Mammary epithelial cell (primary cell): ENCODE measurements at regions of chr17 and their contacts with region 1.

Region 1: DNA sequence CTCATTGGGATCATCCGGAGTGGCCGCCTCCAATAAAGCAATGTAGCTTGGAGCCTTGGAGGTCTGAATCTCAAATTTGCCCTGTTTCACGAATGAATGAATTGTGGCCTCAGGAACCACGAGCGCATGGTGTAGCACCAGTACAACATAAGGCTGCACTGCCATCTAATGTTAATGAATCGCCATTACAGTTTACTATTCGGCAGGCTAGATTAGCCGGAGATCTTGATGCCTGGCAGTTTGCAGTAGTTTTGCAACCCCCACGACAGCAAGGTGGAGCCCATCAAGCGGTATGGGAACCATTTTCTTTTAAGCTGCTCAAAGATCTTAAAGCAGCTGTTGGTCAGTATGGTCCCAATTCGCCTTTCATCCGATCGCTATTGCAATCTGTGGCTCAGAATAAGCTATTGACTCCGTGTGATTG is 18.8 kb downstream of the ALOX15B start:
- DNase-seq: peak; percentile 76
- H3K4me3 ChIP-seq: no peak overlapping the region
- H3K27ac ChIP-seq: no peak overlapping the region
- H3K4me1 ChIP-seq: peaks cover 25% of the 10 kb centered on the region
- H3K27me3 ChIP-seq: no peaks in the 10 kb centered on the region
- CTCF ChIP-seq: peak; percentile 74 to 79

Region 2: GRCh38 chr17:7740481-7741001 is 317.2 kb before region 1 on chr17:
- CTCF ChIA-PET with region 1: no interaction called
- dilution Hi-C with region 1: no loop called
- in situ Hi-C with region 1: loop called in 1 of 2 experiments (anchors 5 kb)
- intact Hi-C with region 1: loop called (anchors 1 kb)
- DNase-seq: no peak
- H3K4me3 ChIP-seq: no peak overlapping the region
- H3K27ac ChIP-seq: no peak overlapping the region
- H3K4me1 ChIP-seq: peaks cover under 1% of the 10 kb centered on the region
- H3K27me3 ChIP-seq: peaks cover 3% of the 10 kb centered on the region
- CTCF ChIP-seq: no peak

Region 3: GRCh38 chr17:7867881-7868329 is 189.8 kb before region 1 on chr17:
- CTCF ChIA-PET with region 1: no interaction called
- dilution Hi-C with region 1: no loop called
- in situ Hi-C with region 1: no loop called
- intact Hi-C with region 1: no loop called
- DNase-seq: peak; percentile 74
- H3K4me3 ChIP-seq: no peak overlapping the region
- H3K27ac ChIP-seq: no peak overlapping the region
- H3K4me1 ChIP-seq: peaks cover 12% of the 10 kb centered on the region
- H3K27me3 ChIP-seq: no peaks in the 10 kb centered on the region
- CTCF ChIP-seq: peak in 1 of 2 donors; percentile 6

Region 4: DNA sequence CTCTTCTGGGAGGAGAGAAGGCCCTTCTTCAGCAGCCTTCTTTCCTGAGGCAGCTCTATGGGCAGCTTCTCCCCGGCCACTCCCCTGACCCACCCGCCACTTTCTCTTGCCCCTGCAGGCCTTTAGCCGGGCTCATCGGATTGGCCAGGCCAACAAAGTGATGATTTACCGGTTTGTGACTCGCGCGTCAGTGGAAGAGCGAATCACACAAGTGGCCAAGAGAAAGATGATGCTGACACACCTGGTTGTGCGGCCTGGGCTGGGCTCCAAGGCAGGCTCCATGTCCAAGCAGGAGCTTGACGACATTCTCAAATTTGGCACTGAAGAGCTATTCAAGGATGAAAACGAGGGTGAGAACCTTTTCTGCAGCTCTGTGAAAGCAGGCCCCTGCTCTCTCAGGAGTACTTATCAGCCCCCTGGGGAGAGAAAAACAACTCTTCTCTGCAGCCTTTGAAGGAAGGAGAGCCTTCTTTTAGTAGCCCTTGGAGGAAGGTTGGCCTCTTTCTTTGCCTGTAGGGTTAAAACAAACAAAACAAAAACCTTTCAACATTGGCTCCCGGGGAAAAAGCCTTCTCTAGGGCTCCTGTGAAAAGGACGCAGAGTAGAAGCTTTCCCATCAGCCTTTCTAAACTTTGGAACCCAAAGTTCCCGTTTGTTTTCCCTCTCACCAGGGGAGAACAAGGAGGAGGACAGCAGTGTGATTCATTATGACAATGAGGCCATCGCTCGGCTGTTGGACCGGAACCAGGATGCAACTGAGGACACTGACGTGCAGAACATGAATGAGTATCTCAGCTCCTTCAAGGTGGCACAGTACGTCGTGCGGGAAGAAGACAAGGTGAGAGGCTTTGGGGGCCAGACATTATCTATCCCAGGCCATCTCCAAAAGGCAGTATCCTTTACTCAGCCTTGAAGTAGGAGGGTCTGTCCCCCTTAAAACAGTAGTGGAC is 154.3 kb before region 1 on chr17:
- CTCF ChIA-PET with region 1: no interaction called
- dilution Hi-C with region 1: loop called (anchors 5 kb)
- in situ Hi-C with region 1: no loop called
- intact Hi-C with region 1: no loop called
- DNase-seq: peak; percentile 71
- H3K4me3 ChIP-seq: no peak overlapping the region
- H3K27ac ChIP-seq: no peak overlapping the region
- H3K4me1 ChIP-seq: no peaks in the 10 kb centered on the region
- H3K27me3 ChIP-seq: no peaks in the 10 kb centered on the region
- CTCF ChIP-seq: no peak

Region 5: DNA sequence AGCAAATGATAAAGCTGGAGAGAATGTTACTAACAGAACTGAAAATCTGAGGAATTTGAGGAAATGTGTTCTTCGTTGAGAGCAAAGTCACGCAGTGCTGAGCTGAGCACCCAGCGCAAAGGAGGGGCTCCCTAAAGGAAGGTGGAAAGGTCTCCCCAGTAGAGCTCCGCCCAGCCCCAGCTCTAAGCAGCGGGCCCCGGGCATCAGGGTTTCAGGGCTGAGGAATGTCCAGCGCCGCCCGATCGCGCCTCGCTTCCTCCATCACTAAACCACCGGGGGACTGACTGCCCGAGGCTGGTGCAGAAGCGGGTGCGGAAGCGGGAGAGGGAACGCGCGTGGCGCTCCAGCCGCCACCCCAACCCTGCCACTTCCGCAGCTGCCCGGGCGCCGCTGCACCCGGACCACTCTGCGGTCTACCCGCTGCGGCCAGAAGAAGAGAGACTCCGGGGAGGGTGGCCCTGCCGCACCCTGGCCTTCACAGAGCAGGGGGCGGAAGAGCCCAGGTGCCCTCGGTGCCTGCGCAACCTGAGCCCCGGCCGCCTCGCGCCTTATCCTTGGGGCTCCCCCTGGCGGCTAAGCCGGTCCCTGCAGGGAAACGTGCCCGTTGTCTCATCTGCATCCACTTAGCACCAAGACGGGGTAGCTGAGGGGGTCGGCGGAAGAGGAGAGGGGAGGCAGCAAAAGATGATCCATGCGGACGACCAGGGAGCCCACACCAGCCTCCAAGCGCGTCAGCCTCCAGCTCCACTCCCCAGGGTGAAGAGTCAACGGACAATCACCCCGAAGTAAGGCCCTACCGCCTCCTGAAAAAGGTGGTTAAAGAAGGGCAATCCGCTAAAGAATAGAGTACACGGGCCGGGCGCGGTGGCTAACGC is 67.7 kb before region 1 on chr17:
- CTCF ChIA-PET with region 1: interaction called, 7 read pairs
- dilution Hi-C with region 1: no loop called
- in situ Hi-C with region 1: no loop called
- intact Hi-C with region 1: loop called (anchors 1 kb)
- DNase-seq: peak; percentile 65
- H3K4me3 ChIP-seq: peak overlapping the region; percentile 55 to 76 (median 55)
- H3K27ac ChIP-seq: peak overlapping the region; percentile 26
- H3K4me1 ChIP-seq: peaks cover 21% of the 10 kb centered on the region
- H3K27me3 ChIP-seq: no peaks in the 10 kb centered on the region
- CTCF ChIP-seq: peak; percentile 85 to 96

Region 6: GRCh38 chr17:8079291-8080207 is 21.8 kb after region 1 on chr17:
- CTCF ChIA-PET with region 1: interaction called, 8 read pairs
- dilution Hi-C with region 1: no loop called
- in situ Hi-C with region 1: no loop called
- intact Hi-C with region 1: loop called (anchors 1 kb)
- DNase-seq: peak; percentile 61
- H3K4me3 ChIP-seq: peak overlapping the region; percentile 28 to 57 (median 52)
- H3K27ac ChIP-seq: no peak overlapping the region
- H3K4me1 ChIP-seq: peaks cover 19% of the 10 kb centered on the region
- H3K27me3 ChIP-seq: no peaks in the 10 kb centered on the region
- CTCF ChIP-seq: peak; percentile 54 to 85

Region 7: DNA sequence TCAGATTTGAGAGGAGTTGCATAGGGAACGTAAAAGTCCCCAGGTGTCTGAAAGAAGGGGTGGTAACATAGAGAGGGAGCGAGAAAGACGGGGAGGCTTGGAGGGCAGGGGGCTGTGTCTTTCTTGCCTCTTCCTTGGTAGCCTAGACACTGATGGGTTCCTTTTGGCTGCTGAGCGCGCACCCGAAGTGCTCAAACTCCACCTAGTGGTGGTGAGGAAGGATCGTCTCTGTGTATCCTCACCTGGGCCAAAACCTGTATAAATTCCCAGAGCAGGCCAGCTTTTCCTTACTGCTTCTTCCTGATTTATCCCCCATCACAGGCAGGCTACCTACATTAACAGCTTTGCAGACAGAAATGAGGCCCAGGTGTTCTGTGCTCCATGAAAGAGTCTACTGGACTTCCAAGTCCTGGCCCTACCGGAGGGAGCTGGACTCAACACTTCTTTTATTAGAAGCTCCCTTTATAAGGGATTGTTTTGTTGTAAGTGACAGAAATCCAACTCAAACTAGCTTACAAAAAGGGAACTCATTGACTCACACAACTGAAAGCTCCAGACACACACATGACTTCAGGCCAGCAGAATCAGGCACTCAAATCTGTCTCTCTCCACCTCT is 243.0 kb after region 1 on chr17:
- CTCF ChIA-PET with region 1: no interaction called
- dilution Hi-C with region 1: no loop called
- in situ Hi-C with region 1: no loop called
- intact Hi-C with region 1: loop called (anchors 1 kb)
- DNase-seq: peak; percentile 50
- H3K4me3 ChIP-seq: no peak overlapping the region
- H3K27ac ChIP-seq: no peak overlapping the region
- H3K4me1 ChIP-seq: no peaks in the 10 kb centered on the region
- H3K27me3 ChIP-seq: no peaks in the 10 kb centered on the region
- CTCF ChIP-seq: peak; percentile 89 to 90

Region 8: GRCh38 chr17:8785547-8786413 is 728.1 kb after region 1 on chr17:
- CTCF ChIA-PET with region 1: interaction called, 3 read pairs
- dilution Hi-C with region 1: no loop called
- in situ Hi-C with region 1: loop called in 1 of 2 experiments (anchors 25 kb)
- intact Hi-C with region 1: loop called (anchors 5 kb)
- DNase-seq: peak; percentile 45
- H3K4me3 ChIP-seq: no peak overlapping the region
- H3K27ac ChIP-seq: no peak overlapping the region
- H3K4me1 ChIP-seq: no peaks in the 10 kb centered on the region
- H3K27me3 ChIP-seq: no peaks in the 10 kb centered on the region
- CTCF ChIP-seq: peak; percentile 83 to 89